Spleen (tissue), 13 donors: ENCODE measurements at regions of chr5 and their contacts with region 1.

Region 1: DNA sequence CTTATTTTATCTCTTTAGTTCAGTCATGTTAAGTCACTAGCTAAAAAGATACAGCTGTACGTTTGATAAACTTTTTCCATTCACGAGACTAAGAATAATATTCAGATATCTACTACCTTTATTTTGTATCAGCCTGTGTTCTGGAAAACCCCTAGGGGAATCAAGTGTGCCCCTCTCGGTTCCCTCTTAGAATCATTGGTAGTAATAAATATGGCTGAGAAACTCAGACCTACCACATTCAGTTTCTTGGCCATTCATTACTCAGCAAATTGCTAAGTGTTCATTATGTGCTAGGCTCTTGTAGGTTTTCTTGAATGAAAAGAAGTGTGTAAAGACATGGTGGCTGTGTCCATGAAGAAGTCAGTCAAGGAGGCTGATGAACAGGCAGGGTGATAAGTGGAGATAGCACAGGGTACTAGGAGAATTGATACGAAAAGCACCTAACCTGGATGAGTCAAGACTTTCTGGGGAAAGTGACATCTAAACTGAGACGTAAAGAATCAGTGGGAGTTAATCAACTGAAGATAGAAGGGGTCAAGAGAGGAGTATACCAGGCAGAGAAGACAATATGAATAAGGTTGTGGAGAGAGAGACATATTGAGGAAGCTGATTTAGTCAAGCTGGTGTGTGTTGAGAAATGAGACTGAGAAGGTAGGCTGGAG is 86.2 kb downstream of the CSNK1G3 start:
- DNase-seq: no peak
- H3K4me3 ChIP-seq: no peak overlapping the region
- H3K27ac ChIP-seq: no peak overlapping the region
- H3K4me1 ChIP-seq: no peaks in the 10 kb centered on the region
- H3K27me3 ChIP-seq: no peaks in the 10 kb centered on the region
- CTCF ChIP-seq: no peak
- POLR2A ChIP-seq: no peak

Region 2: DNA sequence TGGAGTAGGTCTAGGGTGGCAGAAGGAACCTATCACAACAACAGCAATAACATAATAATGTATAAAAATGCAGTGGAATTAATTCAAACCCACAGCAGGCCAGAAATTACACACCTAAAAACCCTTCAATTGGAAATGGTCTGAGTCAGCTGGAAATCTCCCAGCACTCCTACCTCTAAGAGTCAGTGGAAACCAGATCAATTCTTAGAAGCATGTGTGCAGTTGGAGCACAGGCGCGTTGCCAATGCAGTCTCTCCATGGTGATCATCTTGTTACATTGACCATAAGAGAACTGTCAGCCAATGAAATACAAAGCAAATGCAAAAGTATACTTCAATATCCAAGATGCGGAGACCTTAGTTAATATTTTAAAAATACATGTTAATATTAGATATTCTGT is 101.3 kb before region 1 on chr5:
- intact Hi-C with region 1: no loop called
- DNase-seq: no peak
- H3K4me3 ChIP-seq: no peak overlapping the region
- H3K27ac ChIP-seq: no peak overlapping the region
- H3K4me1 ChIP-seq: no peaks in the 10 kb centered on the region
- H3K27me3 ChIP-seq: no peaks in the 10 kb centered on the region
- CTCF ChIP-seq: no peak
- POLR2A ChIP-seq: no peak

Region 3: DNA sequence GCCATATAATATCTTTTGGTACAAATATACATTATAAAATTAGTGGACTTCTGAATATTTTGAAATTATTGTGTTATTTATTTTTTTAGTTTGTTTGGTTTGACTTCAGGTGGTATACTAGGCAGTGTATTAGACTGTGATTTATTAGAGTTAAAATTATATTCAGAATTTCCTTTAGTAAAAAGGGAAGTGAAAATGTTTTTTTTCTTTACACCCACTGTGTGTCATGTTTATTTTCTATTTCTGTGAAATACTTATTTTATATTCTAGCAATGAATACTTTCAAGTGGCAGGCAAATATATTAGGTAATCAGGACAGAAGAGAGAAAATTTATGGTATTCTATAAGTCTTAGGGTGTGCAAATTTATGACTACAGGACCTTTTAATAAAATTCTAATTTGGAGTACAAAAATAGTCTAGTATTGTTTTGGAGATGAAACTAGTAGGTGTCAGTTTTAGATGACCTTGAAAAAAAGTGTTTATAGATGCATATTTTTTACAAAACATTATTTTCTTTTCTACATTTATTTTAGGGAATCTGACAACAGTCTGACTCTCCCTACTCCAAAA is 77.4 kb before region 1 on chr5:
- intact Hi-C with region 1: loop called (anchors 10 kb)
- DNase-seq: no peak
- H3K4me3 ChIP-seq: no peak overlapping the region
- H3K27ac ChIP-seq: peak overlapping the region in 4 of 8 donors; percentile 0 to 16 (median 2)
- H3K4me1 ChIP-seq: peaks cover 5 to 99% (median 59%) of the 10 kb centered on the region in 6 donors
- H3K27me3 ChIP-seq: no peaks in the 10 kb centered on the region
- CTCF ChIP-seq: no peak
- POLR2A ChIP-seq: no peak